ENCODE measurements at regions of chr3 and their contacts with region 1.

Region 1: DNA sequence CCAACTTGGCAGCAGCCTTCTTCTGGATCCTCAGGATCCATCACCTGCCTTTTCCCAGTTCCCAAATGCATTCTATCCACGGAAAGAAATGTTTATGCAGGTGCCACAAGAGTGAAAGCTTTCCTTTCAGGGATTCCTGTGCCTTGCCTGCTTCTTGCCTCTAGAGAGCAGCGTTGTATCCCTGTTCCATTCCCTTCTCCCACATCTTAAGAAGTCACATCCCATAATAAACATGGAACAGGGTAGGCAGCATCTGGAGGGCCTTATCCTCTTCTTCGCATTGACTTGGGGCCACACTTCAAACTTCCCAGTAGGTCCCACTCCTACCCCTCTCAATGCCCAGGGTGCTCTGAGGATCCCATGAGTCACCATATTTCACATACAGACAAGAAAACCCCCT is 72.7 kb upstream of the DCLK3 start:
- DNase-seq: no peak
- ATAC-seq: no peak
- H3K4me3 ChIP-seq: no peak overlapping the region
- H3K4me3 Mint-ChIP-seq: no peak overlapping the region
- H3K27ac ChIP-seq: no peak overlapping the region
- H3K27ac Mint-ChIP-seq: peak overlapping the region in 1 of 2 donors; percentile 53
- H3K4me1 ChIP-seq: no peaks in the 10 kb centered on the region
- H3K4me1 Mint-ChIP-seq: peaks cover 0 to 6% (median 3%) of the 10 kb centered on the region in 3 donors
- H3K27me3 ChIP-seq: no peaks in the 10 kb centered on the region
- H3K27me3 Mint-ChIP-seq: no peaks in the 10 kb centered on the region

Region 2: DNA sequence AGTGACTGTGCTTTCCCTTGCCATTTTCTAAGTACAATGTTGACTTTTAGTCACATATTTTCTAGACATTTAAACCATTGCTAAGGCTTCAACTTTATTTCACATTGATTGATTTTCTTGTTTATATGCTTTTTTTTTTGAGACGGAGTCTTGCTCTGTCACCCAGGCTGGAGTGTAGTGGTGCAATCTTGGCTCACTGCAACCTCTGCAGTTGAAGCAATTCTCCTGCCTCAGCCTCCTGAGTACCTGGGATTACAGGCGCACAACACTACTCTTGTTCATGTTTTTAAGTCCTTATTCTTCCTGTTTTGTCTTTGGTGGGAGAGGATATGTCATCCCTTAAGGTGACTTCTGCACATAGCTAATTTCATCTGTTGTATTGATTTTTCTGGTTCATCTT is 412.2 kb after region 1 on chr3:
- CTCF ChIA-PET with region 1: no interaction called
- POLR2A ChIA-PET with region 1: interaction called in 1 of 2 experiments, 11 read pairs
- DNase-seq: no peak
- ATAC-seq: no peak
- H3K4me3 ChIP-seq: no peak overlapping the region
- H3K4me3 Mint-ChIP-seq: peak overlapping the region in 1 of 3 donors; percentile 20
- H3K27ac ChIP-seq: no peak overlapping the region
- H3K27ac Mint-ChIP-seq: peak overlapping the region in 1 of 2 donors; percentile 5
- H3K4me1 ChIP-seq: peaks cover 15 to 16% of the 10 kb centered on the region in 2 experiments
- H3K4me1 Mint-ChIP-seq: peaks cover 65 to 78% (median 74%) of the 10 kb centered on the region in 3 donors
- H3K27me3 ChIP-seq: no peaks in the 10 kb centered on the region
- H3K27me3 Mint-ChIP-seq: no peaks in the 10 kb centered on the region

Measured in T-cell (primary cell).